ENCODE measurements at regions of chr9 and their contacts with region 1.

Region 1: DNA sequence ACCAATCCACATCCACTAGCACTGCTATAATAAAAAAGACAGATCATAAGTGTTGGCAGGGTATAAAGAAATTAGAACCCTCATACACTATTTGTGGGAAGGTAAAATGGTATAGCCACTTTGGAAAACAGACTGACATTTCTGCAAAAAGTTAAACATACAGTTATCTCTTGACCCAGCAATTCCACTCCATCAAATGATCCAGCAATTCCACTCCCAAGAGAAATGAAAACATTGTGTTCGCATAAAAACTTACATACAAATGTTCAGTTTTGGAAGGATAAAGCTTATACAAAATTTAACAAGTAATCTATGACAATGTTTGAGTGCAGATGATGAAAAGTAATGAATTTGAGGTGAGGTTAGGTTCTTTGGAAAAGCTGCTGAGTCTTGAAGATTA is 2.1 kb downstream of the KIF27 start:
- DNase-seq: no peak
- ATAC-seq: no peak

Region 2: DNA sequence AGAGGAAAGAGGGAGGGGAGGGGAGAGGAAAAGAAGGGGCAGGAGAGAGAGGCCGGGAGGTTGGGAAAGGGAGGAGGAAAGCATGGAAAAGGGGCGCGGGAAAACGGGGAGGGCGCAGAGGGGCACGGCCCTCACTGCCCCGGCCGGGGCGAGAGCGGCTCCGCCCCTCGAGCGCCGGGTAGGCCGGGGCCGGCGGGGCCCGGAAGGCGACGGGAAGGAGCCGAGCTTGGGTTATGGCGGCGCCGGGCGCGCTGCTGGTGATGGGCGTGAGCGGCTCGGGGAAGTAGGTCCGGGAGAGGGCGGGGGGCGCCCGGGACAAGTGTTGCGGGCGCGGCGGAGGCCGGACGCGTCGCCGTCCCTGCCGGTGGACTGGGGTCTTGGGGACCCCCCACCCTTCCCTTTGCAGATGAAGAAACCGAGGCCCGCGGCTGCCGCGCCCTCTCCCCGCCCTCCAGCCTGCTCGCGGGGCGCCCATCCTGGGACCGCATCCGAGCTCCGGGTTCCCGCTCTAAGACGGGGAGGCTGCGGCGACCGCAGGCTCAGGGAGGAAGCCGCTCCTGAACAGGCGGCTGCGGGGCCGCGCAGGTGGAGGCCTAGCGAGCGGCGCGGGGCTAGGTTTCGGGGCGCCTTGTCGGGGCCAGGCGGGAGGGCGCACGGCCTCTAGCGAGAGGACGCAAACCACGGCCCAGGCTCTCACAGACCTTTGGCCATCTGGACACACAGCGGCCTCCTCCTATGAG is 296.0 kb before region 1 on chr9 and contains the start of gene IDNK:
- intact Hi-C with region 1: loop called (anchors 10 kb)
- DNase-seq: peak; percentile 82
- ATAC-seq: peak; percentile 93
- total RNA-seq, gene IDNK: 4.9 TPM

Region 3: DNA sequence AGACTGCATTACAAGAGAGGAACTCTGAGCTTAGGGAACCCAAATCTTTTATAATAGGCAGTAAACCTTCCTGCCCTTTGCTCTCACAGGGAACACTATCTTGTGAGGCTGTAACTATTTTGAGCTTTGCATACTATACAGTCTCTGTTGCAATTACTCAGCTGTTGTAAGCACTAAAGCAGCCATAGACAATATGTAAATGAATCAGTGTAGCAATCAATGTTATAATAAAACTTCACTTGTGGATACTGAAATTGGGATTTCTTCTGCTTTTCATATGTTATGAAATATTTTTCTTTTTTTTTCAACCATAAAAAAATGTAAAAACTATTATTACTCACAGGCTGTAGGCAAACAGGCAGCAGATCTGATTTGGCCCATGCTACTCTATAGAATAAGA is 194.7 kb before region 1 on chr9:
- intact Hi-C with region 1: no loop called
- DNase-seq: no peak
- ATAC-seq: no peak

Region 4: GRCh38 chr9:84216151-84216550 is 297.0 kb after region 1 on chr9:
- intact Hi-C with region 1: no loop called
- DNase-seq: no peak
- ATAC-seq: no peak

Measured in Right ventricle myocardium superior (tissue), 1 donor.